Left colon (tissue), 2 donors: ENCODE measurements at regions of chr3 and their contacts with region 1.

Region 1: DNA sequence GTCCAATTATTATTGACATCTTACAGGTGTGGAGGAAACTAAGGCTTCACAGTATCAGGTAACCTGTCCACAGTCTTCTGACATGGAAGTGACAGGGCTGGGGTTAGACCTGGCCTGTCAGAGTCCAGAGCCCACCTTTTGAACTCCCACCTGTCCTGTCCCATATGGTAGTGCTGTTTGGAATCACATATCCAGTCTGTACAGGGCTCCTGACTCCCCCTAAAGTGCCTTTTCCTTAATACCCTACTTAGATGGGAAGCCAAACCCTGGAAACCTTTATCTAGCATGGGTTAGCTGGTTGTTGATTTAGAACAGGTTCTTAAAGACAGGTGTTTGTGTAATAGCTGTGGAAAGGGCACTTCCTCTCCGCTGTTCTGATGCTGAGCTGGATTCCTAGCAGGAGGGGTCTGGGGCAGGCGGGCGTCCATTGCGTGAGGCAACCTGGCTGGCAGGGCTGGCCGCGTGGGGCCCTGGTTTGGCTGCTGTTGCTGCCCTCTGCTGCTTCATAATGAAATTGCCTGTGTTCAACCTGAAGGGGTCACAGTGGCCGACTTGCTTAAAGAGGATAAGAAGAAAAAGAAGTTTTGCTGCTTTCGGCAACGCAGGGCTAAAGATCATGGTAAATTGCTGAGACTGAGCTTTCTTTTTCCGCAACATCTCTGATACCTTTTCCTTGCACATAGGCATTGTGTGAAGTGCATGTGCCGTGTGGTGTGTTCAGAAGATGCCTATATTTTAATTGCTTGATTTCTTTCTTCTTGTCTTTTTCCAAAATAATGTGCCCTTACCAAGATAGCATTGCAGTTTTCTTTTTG is 136.2 kb downstream of the CHDH start:
- DNase-seq: peak; percentile 45 to 67
- ATAC-seq: peak; percentile 90

Region 2: GRCh38 chr3:52468336-52468735 is 1241.7 kb before region 1 on chr3:
- intact Hi-C with region 1: no loop called
- DNase-seq: no peak
- ATAC-seq: no peak

Region 3: GRCh38 chr3:53295410-53295809 is 414.7 kb before region 1 on chr3:
- intact Hi-C with region 1: loop called in 1 of 2 experiments (anchors 5 kb)
- DNase-seq: no peak
- ATAC-seq: no peak

Region 4: GRCh38 chr3:53375019-53375418 is 335.0 kb before region 1 on chr3:
- intact Hi-C with region 1: loop called in 1 of 2 experiments (anchors 2 kb)
- DNase-seq: peak; percentile 55 to 75
- ATAC-seq: peak; percentile 97